Activated naive CD4-positive, alpha-beta T cell treated with anti-CD3 and anti-CD28 coated beads for 36 hours (primary cell): ENCODE measurements at regions of chr6 and their contacts with region 1.

Region 1: DNA sequence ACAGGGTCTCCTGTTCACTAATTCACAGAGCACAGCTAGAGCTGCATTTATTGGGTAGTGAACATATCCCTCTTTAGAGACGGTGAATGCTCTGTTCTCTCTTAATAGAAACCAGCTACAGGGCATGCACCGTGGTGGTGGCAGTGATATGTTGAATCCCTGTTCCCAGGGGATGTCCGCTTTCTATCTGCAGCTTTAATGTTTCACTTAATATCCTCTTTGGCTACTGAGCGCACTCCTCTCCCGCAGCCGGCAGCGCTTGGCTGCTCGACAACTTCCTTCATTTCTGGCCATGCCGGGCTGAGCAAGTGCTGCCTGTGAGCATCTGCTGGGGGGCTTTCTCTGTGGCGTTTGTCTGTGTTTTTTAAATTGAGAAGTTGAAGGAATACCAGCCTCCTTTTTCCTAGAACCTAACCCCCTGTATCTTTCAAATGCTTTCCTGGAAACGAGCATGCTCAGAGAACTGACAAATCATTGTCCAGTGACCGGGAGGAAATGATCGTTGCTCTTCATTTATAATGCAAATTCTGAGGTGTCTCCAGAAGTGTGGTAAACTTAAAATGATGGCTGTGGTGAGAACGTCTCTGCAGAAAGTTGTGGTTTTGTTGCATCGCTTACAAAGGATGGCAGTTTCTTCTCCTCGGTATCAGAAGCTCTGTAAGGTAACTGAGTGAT is 297.9 kb downstream of the UTRN start:
- DNase-seq: peak; percentile 57
- H3K4me3 Mint-ChIP-seq: peak overlapping the region; percentile 67
- H3K27ac Mint-ChIP-seq: peak overlapping the region; percentile 20
- H3K4me1 Mint-ChIP-seq: peaks cover 15% of the 10 kb centered on the region
- H3K27me3 Mint-ChIP-seq: no peaks in the 10 kb centered on the region

Region 2: GRCh38 chr6:144559865-144560593 is 23.0 kb before region 1 on chr6:
- CTCF ChIA-PET with region 1: interaction called, 3 read pairs
- intact Hi-C with region 1: loop called (anchors 1 kb)
- DNase-seq: peak; percentile 27
- H3K4me3 Mint-ChIP-seq: peak overlapping the region; percentile 45
- H3K27ac Mint-ChIP-seq: peak overlapping the region; percentile 28
- H3K4me1 Mint-ChIP-seq: peaks cover 19% of the 10 kb centered on the region
- H3K27me3 Mint-ChIP-seq: no peaks in the 10 kb centered on the region

Region 3: DNA sequence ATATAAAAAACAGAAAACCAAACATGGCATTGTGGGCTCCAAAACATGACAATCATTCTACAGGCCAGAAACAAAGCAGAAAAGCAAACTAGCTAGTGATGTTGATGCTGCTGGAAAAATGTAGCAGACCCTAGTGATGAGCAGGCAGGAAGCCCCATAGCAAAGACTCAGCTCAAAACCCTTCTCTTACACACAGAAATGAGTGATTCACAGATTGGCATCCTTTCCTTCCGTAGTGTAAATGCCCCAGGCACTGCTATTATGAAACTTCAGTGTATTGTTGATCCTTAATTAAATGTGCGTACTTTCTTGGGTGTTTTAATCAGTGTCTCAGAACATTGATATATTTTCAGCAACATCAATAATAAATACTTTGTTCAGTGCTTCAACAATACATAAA is 127.2 kb after region 1 on chr6:
- CTCF ChIA-PET with region 1: no interaction called
- intact Hi-C with region 1: loop called (anchors 10 kb)
- DNase-seq: no peak
- H3K4me3 Mint-ChIP-seq: no peak overlapping the region
- H3K27ac Mint-ChIP-seq: no peak overlapping the region
- H3K4me1 Mint-ChIP-seq: peaks cover 1% of the 10 kb centered on the region
- H3K27me3 Mint-ChIP-seq: no peaks in the 10 kb centered on the region

Region 4: DNA sequence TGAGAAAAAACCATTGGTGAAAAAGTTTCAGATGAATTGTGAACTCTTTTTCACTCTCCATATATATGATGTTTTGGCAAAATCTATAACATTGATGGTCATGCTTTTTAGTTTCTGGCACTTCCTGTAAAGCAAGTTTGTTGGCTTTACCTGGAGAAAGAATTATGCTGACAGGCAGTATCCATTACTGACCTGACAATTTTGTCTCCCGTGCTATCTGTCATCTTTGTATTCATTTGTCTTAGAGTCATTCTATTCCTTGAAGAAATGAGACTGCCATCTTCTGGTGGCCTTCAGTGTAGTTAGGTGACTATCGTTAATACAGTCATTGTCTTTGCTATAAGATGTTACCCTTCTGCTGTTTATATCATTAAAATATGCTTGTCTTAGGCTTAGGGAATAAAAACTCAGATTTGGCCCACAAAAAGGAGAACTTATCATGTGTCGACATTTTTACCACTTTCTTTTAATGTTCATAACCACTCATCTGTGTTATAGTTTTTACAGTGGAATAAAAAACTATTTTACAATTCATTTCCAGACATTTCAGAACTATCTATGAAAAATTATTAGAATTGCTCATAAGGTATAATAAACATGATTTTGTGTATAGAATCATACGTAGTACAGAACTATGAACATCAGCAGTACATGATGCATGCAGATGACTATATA is 445.2 kb after region 1 on chr6:
- CTCF ChIA-PET with region 1: no interaction called
- intact Hi-C with region 1: loop called (anchors 1 kb)
- DNase-seq: peak; percentile 38
- H3K4me3 Mint-ChIP-seq: no peak overlapping the region
- H3K27ac Mint-ChIP-seq: no peak overlapping the region
- H3K4me1 Mint-ChIP-seq: no peaks in the 10 kb centered on the region
- H3K27me3 Mint-ChIP-seq: peaks cover 24% of the 10 kb centered on the region

Region 5: DNA sequence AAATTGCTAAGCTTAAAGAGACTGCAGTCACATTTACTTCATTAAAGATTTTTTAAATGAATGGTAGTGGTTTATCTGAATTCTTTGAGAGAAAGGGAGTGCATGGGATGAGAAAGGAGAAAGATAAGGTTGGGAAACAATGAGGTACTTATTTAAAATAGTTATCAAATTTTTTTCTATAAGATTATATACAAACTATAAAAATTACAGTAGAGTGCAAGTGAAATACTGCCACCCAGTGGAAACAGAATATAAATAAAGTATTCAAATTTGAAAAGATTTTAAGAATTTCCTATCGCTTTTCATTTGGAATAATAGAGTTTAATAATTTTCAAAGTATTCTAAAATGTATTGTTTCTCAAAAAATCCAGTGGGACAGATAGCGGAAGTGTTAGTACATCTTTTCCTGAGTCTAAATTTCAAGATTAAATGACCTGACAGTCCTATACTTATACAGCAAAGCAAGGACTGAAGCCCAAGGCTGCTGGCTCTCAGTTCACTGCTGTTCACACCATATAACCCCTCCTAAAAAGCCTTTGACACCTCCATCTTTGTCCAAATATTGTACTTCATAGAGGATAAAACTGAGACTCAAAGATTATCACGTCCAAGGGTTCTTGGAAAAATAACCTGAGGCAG is 1121.2 kb after region 1 on chr6:
- CTCF ChIA-PET with region 1: no interaction called
- intact Hi-C with region 1: loop called (anchors 10 kb)
- DNase-seq: no peak
- H3K4me3 Mint-ChIP-seq: no peak overlapping the region
- H3K27ac Mint-ChIP-seq: no peak overlapping the region
- H3K4me1 Mint-ChIP-seq: peaks cover 17% of the 10 kb centered on the region
- H3K27me3 Mint-ChIP-seq: no peaks in the 10 kb centered on the region